Gastrocnemius medialis (tissue), 4 donors: ENCODE measurements at regions of chr10 and their contacts with region 1.

Region 1: GRCh38 chr10:91582153-91582554 is 50.7 kb downstream of the PPP1R3C start:
- DNase-seq: peak; percentile 94 to 98
- ATAC-seq: peak; percentile 93
- H3K4me3 ChIP-seq: no peak overlapping the region
- H3K27ac ChIP-seq: peak overlapping the region; percentile 90 to 99 (median 92)
- H3K4me1 ChIP-seq: peaks cover 21 to 22% of the 10 kb centered on the region in 2 donors
- H3K27me3 ChIP-seq: no peaks in the 10 kb centered on the region
- CTCF ChIP-seq: no peak
- POLR2A ChIP-seq: peak; percentile 55 to 68

Region 2: DNA sequence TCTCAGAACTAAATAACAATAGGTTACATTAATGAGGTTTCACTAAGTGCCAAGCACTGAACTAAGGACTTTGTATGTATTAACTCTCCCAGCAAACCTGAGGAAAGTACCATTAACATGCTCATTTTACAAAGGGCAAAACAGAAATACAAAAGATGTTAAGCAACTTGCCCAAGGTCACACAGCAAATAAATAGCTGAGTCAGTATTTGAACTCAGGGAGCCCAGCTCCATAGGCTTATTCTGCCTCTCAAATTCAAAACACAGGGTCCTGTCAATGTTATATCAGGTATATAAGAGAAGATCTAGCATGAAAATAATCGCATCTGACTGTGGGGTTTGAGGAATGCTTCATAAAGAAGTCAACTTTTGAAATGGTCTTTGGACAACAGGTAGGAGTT is 21.0 kb after region 1 on chr10:
- in situ Hi-C with region 1: no loop called
- intact Hi-C with region 1: no loop called
- DNase-seq: no peak
- ATAC-seq: no peak
- H3K4me3 ChIP-seq: no peak overlapping the region
- H3K27ac ChIP-seq: no peak overlapping the region
- H3K4me1 ChIP-seq: peaks cover 34 to 35% of the 10 kb centered on the region in 2 donors
- H3K27me3 ChIP-seq: no peaks in the 10 kb centered on the region
- CTCF ChIP-seq: no peak
- POLR2A ChIP-seq: no peak

Region 3: GRCh38 chr10:91613411-91614253 is 31.5 kb after region 1 on chr10:
- in situ Hi-C with region 1: no loop called
- intact Hi-C with region 1: loop called (anchors 2 kb)
- DNase-seq: peak; percentile 72 to 83
- ATAC-seq: peak; percentile 78
- H3K4me3 ChIP-seq: peak overlapping the region in 1 of 4 donors; percentile 1
- H3K27ac ChIP-seq: peak overlapping the region; percentile 84 to 97 (median 92)
- H3K4me1 ChIP-seq: peaks cover 46 to 63% of the 10 kb centered on the region in 2 donors
- H3K27me3 ChIP-seq: no peaks in the 10 kb centered on the region
- CTCF ChIP-seq: no peak
- POLR2A ChIP-seq: peak; percentile 56 to 79

Region 4: GRCh38 chr10:91788220-91788924 is 206.2 kb after region 1 on chr10:
- in situ Hi-C with region 1: no loop called
- intact Hi-C with region 1: no loop called
- DNase-seq: no peak
- ATAC-seq: peak in 1 of 2 donors; percentile 18
- H3K4me3 ChIP-seq: no peak overlapping the region
- H3K27ac ChIP-seq: no peak overlapping the region
- H3K4me1 ChIP-seq: peaks cover 8% of the 10 kb centered on the region in 2 donors
- H3K27me3 ChIP-seq: no peaks in the 10 kb centered on the region
- CTCF ChIP-seq: no peak
- POLR2A ChIP-seq: no peak